ENCODE measurements at regions of chr12 and their contacts with region 1.

Region 1: GRCh38 chr12:122860346-122861090 is 25.3 kb downstream of the HIP1R start:
- DNase-seq: peak; percentile 64 to 85 (median 74)
- H3K4me3 ChIP-seq: no peak overlapping the region
- H3K4me3 Mint-ChIP-seq: peak overlapping the region in 1 of 7 donors; percentile 70
- H3K27ac ChIP-seq: no peak overlapping the region
- H3K27ac Mint-ChIP-seq: peak overlapping the region in 4 of 8 donors; percentile 54 to 85 (median 58)
- H3K4me1 ChIP-seq: no peaks in the 10 kb centered on the region
- H3K4me1 Mint-ChIP-seq: peaks cover 1 to 13% (median 7%) of the 10 kb centered on the region in 3 donors
- H3K27me3 ChIP-seq: no peaks in the 10 kb centered on the region
- H3K27me3 Mint-ChIP-seq: no peaks in the 10 kb centered on the region

Region 2: DNA sequence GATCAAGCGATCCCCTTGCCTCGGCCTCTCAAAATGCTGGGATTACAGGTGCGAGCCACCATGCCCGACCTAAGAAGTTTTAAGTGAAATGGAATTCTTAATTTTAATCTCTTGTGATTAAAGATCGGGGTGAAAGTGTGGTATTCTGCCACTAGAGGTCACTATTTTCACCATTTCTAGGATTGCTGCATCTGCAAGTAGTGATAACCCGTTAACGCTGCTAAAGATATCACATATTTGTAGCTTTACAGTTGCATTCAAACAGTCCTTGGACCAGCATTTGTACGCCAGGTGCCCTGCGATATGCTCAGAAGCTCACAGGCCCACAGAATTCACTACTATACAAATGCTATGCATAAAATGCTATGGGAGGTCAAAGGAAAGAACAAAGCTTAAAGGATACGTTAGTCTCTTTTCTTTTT is 66.8 kb before region 1 on chr12:
- CTCF ChIA-PET with region 1: interaction called, 12 read pairs
- POLR2A ChIA-PET with region 1: interaction called, 3 read pairs
- DNase-seq: peak in 2 of 5 donors; percentile 46 to 66
- H3K4me3 ChIP-seq: no peak overlapping the region
- H3K4me3 Mint-ChIP-seq: no peak overlapping the region
- H3K27ac ChIP-seq: no peak overlapping the region
- H3K27ac Mint-ChIP-seq: peak overlapping the region in 1 of 8 donors; percentile 81
- H3K4me1 ChIP-seq: peaks cover 4% of the 10 kb centered on the region
- H3K4me1 Mint-ChIP-seq: peaks cover 3 to 5% (median 4%) of the 10 kb centered on the region in 3 donors
- H3K27me3 ChIP-seq: no peaks in the 10 kb centered on the region
- H3K27me3 Mint-ChIP-seq: peaks cover 0 to 1% of the 10 kb centered on the region in 2 donors

Region 3: DNA sequence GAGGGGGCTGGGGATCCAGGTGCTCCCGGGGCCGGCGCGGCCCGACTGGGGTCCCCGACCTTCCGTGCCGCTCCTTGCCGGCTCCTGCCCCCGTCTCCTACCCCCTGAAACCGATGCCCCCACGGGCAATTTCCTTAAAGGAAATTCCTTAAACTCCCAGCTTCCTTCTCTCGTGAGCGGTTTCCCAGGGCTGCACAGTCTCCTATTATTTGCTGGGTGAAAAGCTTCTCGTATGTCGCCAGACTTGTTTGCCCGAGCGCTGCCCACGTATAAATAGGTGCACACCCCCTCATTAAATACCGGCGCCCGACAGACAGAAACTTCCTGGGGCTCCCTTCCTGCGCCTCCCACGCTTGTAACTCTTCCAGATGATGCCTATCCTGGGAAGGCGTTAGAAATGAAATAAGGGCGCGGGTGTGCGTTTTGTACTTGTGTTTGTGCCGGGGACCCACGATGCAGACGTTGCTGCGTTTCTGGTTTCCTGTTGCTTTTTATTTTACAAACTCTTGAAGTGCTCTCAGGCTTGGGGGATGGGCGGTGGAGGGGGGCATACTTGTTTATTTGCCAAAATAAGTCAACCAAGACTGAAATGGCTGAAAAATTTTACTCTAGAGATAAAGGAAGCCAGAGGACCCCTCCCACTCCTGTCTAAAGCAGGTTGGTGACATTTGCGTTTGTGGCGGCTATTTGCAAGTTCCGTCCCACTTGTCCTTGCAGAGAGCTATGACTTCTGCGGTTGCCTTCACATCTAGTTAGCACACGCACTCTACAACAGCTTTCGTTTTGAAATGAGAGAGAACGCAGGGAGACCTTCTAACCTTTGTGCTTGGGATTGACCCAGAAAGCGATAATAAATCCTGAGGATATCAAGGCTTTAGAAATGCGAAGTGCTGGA is 24.2 kb before region 1 on chr12:
- CTCF ChIA-PET with region 1: interaction called, 4 read pairs
- POLR2A ChIA-PET with region 1: interaction called, 12 read pairs
- DNase-seq: peak in 4 of 5 donors; percentile 29 to 84 (median 66)
- H3K4me3 ChIP-seq: peak overlapping the region; percentile 67
- H3K4me3 Mint-ChIP-seq: peak overlapping the region; percentile 90 to 99 (median 97)
- H3K27ac ChIP-seq: peak overlapping the region; percentile 56
- H3K27ac Mint-ChIP-seq: peak overlapping the region; percentile 80 to 98 (median 94)
- H3K4me1 ChIP-seq: peaks cover 17% of the 10 kb centered on the region
- H3K4me1 Mint-ChIP-seq: peaks cover 45 to 63% (median 51%) of the 10 kb centered on the region in 3 donors
- H3K27me3 ChIP-seq: no peaks in the 10 kb centered on the region
- H3K27me3 Mint-ChIP-seq: peaks cover 0 to 7% of the 10 kb centered on the region in 2 donors

Region 4: DNA sequence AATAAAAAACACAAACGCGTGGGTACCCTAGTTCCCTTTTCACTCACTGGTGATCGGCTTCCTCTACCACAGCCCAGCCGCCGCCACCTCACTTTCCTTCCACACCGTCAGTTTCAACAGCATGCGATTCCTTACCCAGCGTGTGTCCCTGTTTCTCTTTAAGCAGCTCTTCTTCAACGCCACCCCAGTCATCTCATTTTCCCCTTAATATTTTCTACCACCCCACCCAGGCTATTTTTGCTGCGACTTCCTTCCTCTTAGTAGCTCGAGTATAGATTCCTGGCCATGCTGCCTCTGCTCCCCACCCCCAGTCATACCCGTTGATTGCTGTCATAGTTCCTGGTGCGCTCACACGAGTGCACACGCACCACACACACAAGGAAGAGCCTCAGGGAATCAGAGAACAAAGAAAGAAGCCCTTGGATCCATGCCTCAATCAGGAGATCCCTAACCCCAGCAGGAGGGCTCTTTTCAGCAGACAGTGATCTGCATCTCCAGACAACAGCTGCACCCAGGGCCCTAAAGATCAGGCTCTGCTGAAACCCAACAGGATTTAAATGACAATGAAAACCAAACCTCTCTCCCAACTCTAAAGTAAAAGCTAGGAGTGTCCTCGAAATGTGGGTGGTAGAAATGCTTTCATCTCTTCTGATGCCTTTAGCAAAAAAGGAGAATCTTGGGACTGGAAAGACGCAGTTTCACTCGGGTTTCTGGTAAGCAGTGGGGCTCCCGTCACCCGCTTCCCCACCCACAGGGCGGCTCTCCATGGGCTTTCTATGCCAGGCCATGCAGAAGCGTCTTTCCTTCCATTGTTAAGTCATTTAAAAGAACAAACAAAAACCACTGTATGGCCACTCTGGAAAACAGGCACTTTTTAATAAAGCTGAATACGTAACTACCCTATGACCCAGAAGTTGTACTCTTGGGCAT is 11.6 kb after region 1 on chr12:
- CTCF ChIA-PET with region 1: interaction called, 27 read pairs
- POLR2A ChIA-PET with region 1: interaction called, 4 read pairs
- DNase-seq: peak in 3 of 5 donors; percentile 39 to 53 (median 42)
- H3K4me3 ChIP-seq: peak overlapping the region; percentile 57
- H3K4me3 Mint-ChIP-seq: peak overlapping the region; percentile 77 to 98 (median 87)
- H3K27ac ChIP-seq: peak overlapping the region; percentile 19
- H3K27ac Mint-ChIP-seq: peak overlapping the region; percentile 75 to 98 (median 94)
- H3K4me1 ChIP-seq: peaks cover 71% of the 10 kb centered on the region
- H3K4me1 Mint-ChIP-seq: peaks cover 69 to 84% (median 75%) of the 10 kb centered on the region in 3 donors
- H3K27me3 ChIP-seq: no peaks in the 10 kb centered on the region
- H3K27me3 Mint-ChIP-seq: no peaks in the 10 kb centered on the region

Region 5: GRCh38 chr12:122880668-122881067 is 20.1 kb after region 1 on chr12:
- CTCF ChIA-PET with region 1: interaction called, 12 read pairs
- POLR2A ChIA-PET with region 1: no interaction called
- DNase-seq: no peak
- H3K4me3 ChIP-seq: no peak overlapping the region
- H3K4me3 Mint-ChIP-seq: peak overlapping the region in 2 of 7 donors; percentile 14 to 58
- H3K27ac ChIP-seq: no peak overlapping the region
- H3K27ac Mint-ChIP-seq: peak overlapping the region; percentile 40 to 97 (median 80)
- H3K4me1 ChIP-seq: peaks cover 66% of the 10 kb centered on the region
- H3K4me1 Mint-ChIP-seq: peaks cover 87 to 96% (median 94%) of the 10 kb centered on the region in 3 donors
- H3K27me3 ChIP-seq: no peaks in the 10 kb centered on the region
- H3K27me3 Mint-ChIP-seq: no peaks in the 10 kb centered on the region

Region 6: GRCh38 chr12:122895705-122896636 is 35.5 kb after region 1 on chr12 and contains the start of gene VPS37B:
- CTCF ChIA-PET with region 1: interaction called, 15 read pairs
- POLR2A ChIA-PET with region 1: interaction called, 6 read pairs
- DNase-seq: peak; percentile 85 to 94 (median 93)
- H3K4me3 ChIP-seq: peak within 1 kb of the TSS; percentile 94
- H3K4me3 Mint-ChIP-seq: peak within 1 kb of the TSS; percentile 85 to 99 (median 94)
- H3K27ac ChIP-seq: peak within 1 kb of the TSS; percentile 91
- H3K27ac Mint-ChIP-seq: peak within 1 kb of the TSS; percentile 94 to 100 (median 99)
- H3K4me1 ChIP-seq: peaks cover 91% of the 10 kb centered on the region
- H3K4me1 Mint-ChIP-seq: peaks cover 80 to 95% (median 95%) of the 10 kb centered on the region in 3 donors
- H3K27me3 ChIP-seq: no peaks in the 10 kb centered on the region
- H3K27me3 Mint-ChIP-seq: peaks cover 0 to 5% of the 10 kb centered on the region in 2 donors
- total RNA-seq, gene VPS37B: 19.3 to 19.9 TPM

Region 7: GRCh38 chr12:122951979-122952892 is 91.7 kb after region 1 on chr12:
- CTCF ChIA-PET with region 1: interaction called, 162 read pairs
- POLR2A ChIA-PET with region 1: no interaction called
- DNase-seq: peak; percentile 51 to 81 (median 63)
- H3K4me3 ChIP-seq: no peak overlapping the region
- H3K4me3 Mint-ChIP-seq: no peak overlapping the region
- H3K27ac ChIP-seq: no peak overlapping the region
- H3K27ac Mint-ChIP-seq: peak overlapping the region in 2 of 8 donors; percentile 14 to 17
- H3K4me1 ChIP-seq: peaks cover 1% of the 10 kb centered on the region
- H3K4me1 Mint-ChIP-seq: peaks cover 5 to 9% (median 8%) of the 10 kb centered on the region in 3 donors
- H3K27me3 ChIP-seq: no peaks in the 10 kb centered on the region
- H3K27me3 Mint-ChIP-seq: no peaks in the 10 kb centered on the region